B cell (primary cell): ENCODE measurements at regions of chr2 and their contacts with region 1.

Region 1: DNA sequence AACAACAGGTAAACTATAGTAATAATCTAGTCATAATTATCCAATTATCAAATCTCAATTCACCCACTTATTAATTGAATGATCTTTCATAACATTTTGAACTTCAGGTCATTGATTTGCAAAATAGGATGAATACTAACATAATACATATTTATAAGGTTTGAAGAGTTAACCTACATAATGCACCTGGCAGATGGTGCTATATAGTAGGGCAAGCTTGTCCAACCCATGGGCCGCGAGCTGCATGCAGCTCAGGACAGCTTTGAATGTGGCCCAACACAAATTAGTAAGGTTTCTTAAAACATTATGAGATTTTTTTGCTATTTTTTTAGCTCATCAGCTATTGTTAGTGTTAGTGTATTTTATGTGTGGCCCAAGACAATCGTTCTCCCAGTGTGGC is 815.8 kb upstream of the ID2 start:
- DNase-seq: no peak
- ATAC-seq: no peak
- H3K4me3 ChIP-seq: no peak overlapping the region
- H3K4me3 Mint-ChIP-seq: no peak overlapping the region
- H3K27ac ChIP-seq: no peak overlapping the region
- H3K27ac Mint-ChIP-seq: no peak overlapping the region
- H3K4me1 ChIP-seq: no peaks in the 10 kb centered on the region
- H3K4me1 Mint-ChIP-seq: no peaks in the 10 kb centered on the region
- H3K27me3 ChIP-seq: no peaks in the 10 kb centered on the region
- H3K27me3 Mint-ChIP-seq: peaks cover 16% of the 10 kb centered on the region
- CTCF ChIP-seq: no peak

Region 2: DNA sequence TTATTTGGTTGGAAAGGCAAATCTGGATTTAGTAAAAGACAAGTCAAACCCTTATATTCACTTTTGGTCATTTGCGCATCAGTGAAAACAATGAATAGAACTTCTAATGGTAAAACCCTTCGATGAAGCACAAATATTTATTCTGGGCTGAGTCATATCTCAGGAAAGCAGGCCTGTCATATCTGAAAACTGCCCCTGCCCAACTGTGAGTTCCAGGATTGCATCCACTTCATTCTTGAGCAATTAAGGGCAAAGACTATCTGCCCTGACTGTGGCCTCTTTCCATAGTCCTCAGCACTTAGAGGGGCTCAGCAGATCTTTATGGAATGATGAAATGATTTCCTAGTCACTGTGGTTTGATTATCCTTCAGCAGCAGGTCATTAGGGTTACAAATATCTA is 20.6 kb after region 1 on chr2:
- CTCF ChIA-PET with region 1: no interaction called
- POLR2A ChIA-PET with region 1: no interaction called
- intact Hi-C with region 1: no loop called
- DNase-seq: no peak
- ATAC-seq: no peak
- H3K4me3 ChIP-seq: no peak overlapping the region
- H3K4me3 Mint-ChIP-seq: no peak overlapping the region
- H3K27ac ChIP-seq: no peak overlapping the region
- H3K27ac Mint-ChIP-seq: no peak overlapping the region
- H3K4me1 ChIP-seq: no peaks in the 10 kb centered on the region
- H3K4me1 Mint-ChIP-seq: no peaks in the 10 kb centered on the region
- H3K27me3 ChIP-seq: no peaks in the 10 kb centered on the region
- H3K27me3 Mint-ChIP-seq: no peaks in the 10 kb centered on the region
- CTCF ChIP-seq: no peak

Region 3: DNA sequence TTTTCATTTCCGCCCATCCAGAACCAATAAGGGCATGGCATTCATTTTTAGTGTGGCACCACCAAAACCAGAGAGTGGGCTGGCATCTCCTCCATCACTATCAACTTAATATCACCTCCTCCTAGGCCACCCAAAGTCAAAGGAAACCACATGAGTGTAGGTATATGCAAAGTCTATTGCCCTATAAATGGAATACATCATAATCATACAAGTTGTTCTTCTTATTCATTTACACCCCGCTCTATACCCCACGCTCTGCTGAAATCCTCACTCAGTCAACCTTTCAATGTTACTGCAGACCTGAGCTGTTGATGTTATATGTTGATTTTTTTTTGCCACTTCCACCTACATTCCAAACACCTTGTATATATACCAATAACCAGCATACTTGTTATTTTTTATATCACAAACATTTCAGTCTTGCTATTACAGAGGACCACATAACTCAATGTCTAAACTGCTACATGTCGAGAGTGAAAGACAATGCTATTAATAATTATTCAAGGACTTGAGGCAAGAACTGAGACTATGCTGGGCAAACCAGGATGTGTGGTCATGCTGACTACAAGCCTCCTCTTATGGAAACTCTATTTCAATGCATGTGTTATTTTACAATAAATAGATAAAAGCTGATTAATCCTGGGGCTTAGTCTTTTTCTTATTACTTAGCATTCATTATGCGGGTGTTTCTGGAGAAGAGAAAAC is 349.2 kb after region 1 on chr2:
- CTCF ChIA-PET with region 1: no interaction called
- POLR2A ChIA-PET with region 1: no interaction called
- intact Hi-C with region 1: no loop called
- DNase-seq: no peak
- ATAC-seq: no peak
- H3K4me3 ChIP-seq: no peak overlapping the region
- H3K4me3 Mint-ChIP-seq: no peak overlapping the region
- H3K27ac ChIP-seq: no peak overlapping the region
- H3K27ac Mint-ChIP-seq: no peak overlapping the region
- H3K4me1 ChIP-seq: no peaks in the 10 kb centered on the region
- H3K4me1 Mint-ChIP-seq: no peaks in the 10 kb centered on the region
- H3K27me3 ChIP-seq: no peaks in the 10 kb centered on the region
- H3K27me3 Mint-ChIP-seq: peaks cover 14% of the 10 kb centered on the region
- CTCF ChIP-seq: no peak

Region 4: DNA sequence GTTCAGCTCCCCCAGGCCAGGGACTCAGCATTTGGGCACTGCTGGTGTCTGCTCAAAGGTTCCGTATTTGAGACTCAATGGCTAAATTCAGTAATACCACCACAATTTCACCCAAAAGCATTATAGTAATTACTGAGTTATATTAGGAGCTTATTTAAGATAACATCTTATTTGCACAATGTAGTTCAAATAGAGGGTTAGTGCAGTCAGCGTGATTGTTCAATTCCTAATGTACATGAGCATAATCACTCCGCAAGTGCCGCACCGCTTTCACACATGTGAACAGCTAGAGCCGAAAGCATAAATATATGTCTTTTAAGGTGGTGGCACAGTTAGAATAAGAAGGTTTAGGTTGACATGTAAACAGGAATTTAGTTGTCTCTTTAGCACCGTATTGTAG is 641.5 kb after region 1 on chr2:
- CTCF ChIA-PET with region 1: no interaction called
- POLR2A ChIA-PET with region 1: interaction called, 10 read pairs
- intact Hi-C with region 1: no loop called
- DNase-seq: no peak
- ATAC-seq: no peak
- H3K4me3 ChIP-seq: no peak overlapping the region
- H3K4me3 Mint-ChIP-seq: no peak overlapping the region
- H3K27ac ChIP-seq: no peak overlapping the region
- H3K27ac Mint-ChIP-seq: no peak overlapping the region
- H3K4me1 ChIP-seq: no peaks in the 10 kb centered on the region
- H3K4me1 Mint-ChIP-seq: no peaks in the 10 kb centered on the region
- H3K27me3 ChIP-seq: peaks cover 0 to 59% (median 11%) of the 10 kb centered on the region in 4 experiments
- H3K27me3 Mint-ChIP-seq: peaks cover 68% of the 10 kb centered on the region
- CTCF ChIP-seq: no peak